H1 (cell line): ENCODE measurements at regions of chr2 and their contacts with region 1.

Region 1: GRCh38 chr2:112749755-112750559 is 14.5 kb downstream of the CKAP2L start:
- DNase-seq: peak in 1 of 2 experiments; percentile 86
- H3K4me3 ChIP-seq: no peak overlapping the region
- H3K27ac ChIP-seq: peak overlapping the region; percentile 21; the same call in 1 of the 2 replicates
- H3K4me1 ChIP-seq: no peaks in the 10 kb centered on the region
- H3K27me3 ChIP-seq: no peaks in the 10 kb centered on the region
- CTCF ChIP-seq: peak; percentile 91 to 95 (median 92)
- EP300 ChIP-seq: no peak
- POLR2A ChIP-seq: no peak
- RAD21 ChIP-seq: peak; percentile 88 to 90

Region 2: DNA sequence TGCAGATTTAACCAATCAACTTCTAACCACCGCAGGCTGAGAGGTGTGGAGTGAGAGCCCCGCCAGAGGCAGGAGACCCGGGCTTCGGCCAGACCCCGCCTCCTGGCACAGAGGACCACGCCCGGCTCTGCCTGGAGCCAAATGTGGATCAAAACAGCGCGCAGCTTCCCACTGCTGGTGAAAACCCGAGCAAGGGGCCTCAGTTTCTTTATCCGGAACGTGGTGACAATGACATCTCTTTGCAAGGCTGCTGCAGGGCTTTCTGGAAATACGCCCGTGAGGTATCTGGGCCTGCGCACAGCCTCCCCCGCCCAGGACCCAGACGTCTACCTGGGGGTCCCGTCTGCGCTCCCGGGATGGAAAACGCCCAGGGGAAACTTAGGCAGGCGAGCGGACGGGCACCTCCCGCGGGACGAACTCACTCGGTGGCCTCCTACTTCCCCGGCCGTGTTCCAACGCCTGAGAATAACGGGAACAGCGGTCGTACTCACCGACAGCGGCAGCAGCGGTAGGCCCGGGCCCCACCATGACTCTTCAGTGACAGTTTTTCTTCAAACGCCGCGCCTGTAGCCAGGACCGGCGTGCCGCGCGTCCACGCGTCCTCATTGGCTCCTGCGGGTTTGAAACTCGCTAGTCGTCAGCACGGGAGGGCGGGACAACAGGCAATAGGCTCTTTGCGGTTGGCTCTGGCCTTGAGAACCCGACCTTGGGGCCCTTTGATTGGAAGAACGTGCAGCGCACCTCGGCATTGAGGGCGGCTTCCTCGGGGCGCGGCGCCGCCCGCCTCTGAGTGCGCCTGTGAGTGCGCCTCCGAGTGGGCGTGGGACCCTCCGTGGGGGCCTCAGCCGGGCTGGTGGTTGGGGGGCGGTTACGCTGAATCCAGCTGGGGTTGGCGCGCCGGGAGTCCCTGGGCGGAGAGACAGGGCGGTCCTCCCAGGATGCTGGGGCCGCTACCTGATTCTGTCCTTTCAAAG is 14.4 kb after region 1 on chr2 and contains the start of gene CKAP2L:
- CTCF ChIA-PET with region 1: interaction called, 15 read pairs
- POLR2A ChIA-PET with region 1: no interaction called
- DNase-seq: peak; percentile 90 to 91
- H3K4me3 ChIP-seq: peak within 1 kb of the TSS; percentile 76 to 91 (median 86)
- H3K27ac ChIP-seq: no peak within 1 kb of the TSS
- H3K4me1 ChIP-seq: peaks cover 0 to 8% (median 3%) of the 10 kb centered on the region in 4 experiments; a peak in 3 of 7 replicates
- H3K27me3 ChIP-seq: no peaks in the 10 kb centered on the region
- CTCF ChIP-seq: no peak
- EP300 ChIP-seq: no peak
- POLR2A ChIP-seq: peak in 1 of 2 experiments; percentile 36; a peak in 1 of 3 replicates
- RAD21 ChIP-seq: no peak
- total RNA-seq, gene CKAP2L: 19.3 and 20.7 TPM in 2 replicates

Region 3: DNA sequence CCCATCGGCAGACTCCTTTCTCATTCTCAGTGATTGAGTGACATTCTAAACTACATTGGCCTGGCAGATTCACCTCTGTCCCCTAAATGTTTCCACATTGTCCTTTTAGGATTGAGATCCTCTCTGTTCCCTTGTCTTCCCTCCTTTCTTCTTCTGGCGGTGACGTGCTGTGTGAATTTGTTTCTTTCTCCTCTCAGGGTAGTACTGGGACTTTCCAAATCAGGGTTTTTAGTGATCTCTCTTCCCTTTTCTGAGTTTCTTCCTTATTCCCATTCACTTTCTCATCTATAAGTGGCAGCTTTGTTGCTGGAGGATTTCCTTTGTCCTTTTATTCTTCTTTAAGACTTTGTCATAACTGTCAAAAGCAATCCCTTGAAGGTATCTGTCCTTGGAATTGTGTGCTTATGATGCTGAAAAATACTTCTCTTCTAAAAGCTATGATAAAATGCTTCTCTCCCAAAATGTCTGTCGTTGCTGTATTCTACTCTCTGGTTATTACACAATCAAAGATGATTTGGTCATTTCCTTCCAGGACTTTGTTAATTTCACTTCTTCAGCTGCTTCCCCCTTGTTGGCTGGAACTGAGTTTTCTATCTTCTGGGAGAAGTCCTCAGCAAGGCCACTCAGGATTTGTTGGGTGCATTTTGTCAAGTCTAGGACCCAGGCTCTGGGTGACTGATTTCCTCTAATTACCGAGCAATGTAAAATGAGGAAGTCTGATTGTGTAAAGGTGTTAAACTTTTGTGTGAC is 91.5 kb after region 1 on chr2:
- CTCF ChIA-PET with region 1: no interaction called
- POLR2A ChIA-PET with region 1: no interaction called
- DNase-seq: no peak
- H3K4me3 ChIP-seq: no peak overlapping the region
- H3K27ac ChIP-seq: no peak overlapping the region
- H3K4me1 ChIP-seq: peaks cover 0 to under 1% (median 0%) of the 10 kb centered on the region in 4 experiments; a peak in 1 of 7 replicates
- H3K27me3 ChIP-seq: no peaks in the 10 kb centered on the region
- CTCF ChIP-seq: no peak
- EP300 ChIP-seq: no peak
- POLR2A ChIP-seq: no peak
- RAD21 ChIP-seq: no peak

Region 4: GRCh38 chr2:112891385-112891831 is 141.5 kb after region 1 on chr2:
- CTCF ChIA-PET with region 1: interaction called, 178 read pairs
- POLR2A ChIA-PET with region 1: no interaction called
- DNase-seq: no peak
- H3K4me3 ChIP-seq: no peak overlapping the region
- H3K27ac ChIP-seq: no peak overlapping the region
- H3K4me1 ChIP-seq: no peaks in the 10 kb centered on the region
- H3K27me3 ChIP-seq: no peaks in the 10 kb centered on the region
- CTCF ChIP-seq: no peak
- EP300 ChIP-seq: no peak
- POLR2A ChIP-seq: no peak
- RAD21 ChIP-seq: no peak

Region 5: GRCh38 chr2:112928856-112929255 is 178.9 kb after region 1 on chr2:
- CTCF ChIA-PET with region 1: interaction called, 10 read pairs
- POLR2A ChIA-PET with region 1: no interaction called
- DNase-seq: no peak
- H3K4me3 ChIP-seq: no peak overlapping the region
- H3K27ac ChIP-seq: no peak overlapping the region
- H3K4me1 ChIP-seq: no peaks in the 10 kb centered on the region
- H3K27me3 ChIP-seq: no peaks in the 10 kb centered on the region
- CTCF ChIP-seq: no peak
- EP300 ChIP-seq: no peak
- POLR2A ChIP-seq: no peak
- RAD21 ChIP-seq: no peak